CD8-positive, alpha-beta memory T cell (primary cell): ENCODE measurements at regions of chr1 and their contacts with region 1.

Region 1: DNA sequence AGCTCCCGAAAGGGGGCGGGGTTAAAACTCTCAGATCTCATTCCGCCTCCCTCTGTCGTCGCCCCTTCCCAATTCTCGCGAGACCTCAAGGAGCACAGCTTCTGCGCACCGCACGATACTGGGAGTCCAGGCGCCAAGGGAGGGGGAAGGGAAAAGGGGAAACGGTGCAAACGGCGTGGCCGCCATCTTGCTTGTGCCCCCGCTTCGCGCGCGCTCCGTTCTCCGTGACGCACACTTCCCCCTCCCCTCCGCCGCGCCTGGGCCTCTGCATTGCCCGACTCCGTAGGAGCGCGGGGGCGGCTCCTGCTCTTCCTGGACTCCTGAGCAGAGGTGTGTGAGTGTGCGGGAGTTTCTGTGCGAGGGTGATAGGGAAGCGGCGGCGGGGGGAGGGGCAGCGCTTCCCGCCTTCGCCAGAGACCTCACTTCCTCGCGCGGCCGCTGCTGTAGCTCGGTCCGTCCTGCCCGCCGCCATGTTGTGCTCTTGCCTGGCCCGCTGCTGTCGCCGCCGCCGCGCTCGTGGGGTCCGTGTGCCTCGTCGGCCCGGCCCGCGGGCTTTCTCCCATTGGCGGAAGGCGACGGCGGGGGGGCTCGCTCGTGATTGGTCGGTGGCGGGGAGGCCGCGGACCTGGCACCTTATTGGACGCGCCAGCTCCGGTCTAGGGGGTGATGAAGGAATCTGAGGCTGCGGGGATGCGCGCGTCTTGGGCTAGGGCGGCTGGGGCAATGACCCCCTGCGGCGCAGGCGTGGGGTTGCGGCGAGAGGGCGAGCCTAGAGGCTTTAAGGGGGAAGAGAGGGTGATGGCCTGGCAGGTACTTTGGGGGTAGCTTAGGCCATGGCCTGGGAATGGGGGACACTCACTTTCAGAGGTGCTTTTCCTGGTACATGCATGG is at the start of gene NFYC:
- DNase-seq: peak; percentile 89 to 97 (median 94)
- H3K4me3 ChIP-seq: peak within 1 kb of the TSS; percentile 94
- H3K4me3 Mint-ChIP-seq: peak within 1 kb of the TSS; percentile 90 to 100 (median 93)
- H3K27ac ChIP-seq: peak within 1 kb of the TSS; percentile 97
- H3K27ac Mint-ChIP-seq: peak within 1 kb of the TSS; percentile 92 to 100 (median 97)
- H3K4me1 ChIP-seq: peaks cover 41% of the 10 kb centered on the region
- H3K4me1 Mint-ChIP-seq: peaks cover 59 to 74% (median 71%) of the 10 kb centered on the region in 3 donors
- H3K27me3 ChIP-seq: no peaks in the 10 kb centered on the region
- H3K27me3 Mint-ChIP-seq: peaks cover 0 to 5% of the 10 kb centered on the region in 2 donors
- total RNA-seq, gene NFYC: 61.3 to 61.6 TPM

Region 2: GRCh38 chr1:40709100-40709801 is 17.5 kb after region 1 on chr1:
- CTCF ChIA-PET with region 1: interaction called, 10 read pairs
- POLR2A ChIA-PET with region 1: interaction called, 20 read pairs
- DNase-seq: peak; percentile 59 to 88 (median 82)
- H3K4me3 ChIP-seq: peak overlapping the region; percentile 67
- H3K4me3 Mint-ChIP-seq: peak overlapping the region; percentile 86 to 98 (median 95)
- H3K27ac ChIP-seq: peak overlapping the region; percentile 68
- H3K27ac Mint-ChIP-seq: peak overlapping the region; percentile 73 to 99 (median 94)
- H3K4me1 ChIP-seq: peaks cover 54% of the 10 kb centered on the region
- H3K4me1 Mint-ChIP-seq: peaks cover 63 to 76% (median 68%) of the 10 kb centered on the region in 3 donors
- H3K27me3 ChIP-seq: no peaks in the 10 kb centered on the region
- H3K27me3 Mint-ChIP-seq: no peaks in the 10 kb centered on the region